ENCODE measurements at regions of chr19 and their contacts with region 1.

Region 1: DNA sequence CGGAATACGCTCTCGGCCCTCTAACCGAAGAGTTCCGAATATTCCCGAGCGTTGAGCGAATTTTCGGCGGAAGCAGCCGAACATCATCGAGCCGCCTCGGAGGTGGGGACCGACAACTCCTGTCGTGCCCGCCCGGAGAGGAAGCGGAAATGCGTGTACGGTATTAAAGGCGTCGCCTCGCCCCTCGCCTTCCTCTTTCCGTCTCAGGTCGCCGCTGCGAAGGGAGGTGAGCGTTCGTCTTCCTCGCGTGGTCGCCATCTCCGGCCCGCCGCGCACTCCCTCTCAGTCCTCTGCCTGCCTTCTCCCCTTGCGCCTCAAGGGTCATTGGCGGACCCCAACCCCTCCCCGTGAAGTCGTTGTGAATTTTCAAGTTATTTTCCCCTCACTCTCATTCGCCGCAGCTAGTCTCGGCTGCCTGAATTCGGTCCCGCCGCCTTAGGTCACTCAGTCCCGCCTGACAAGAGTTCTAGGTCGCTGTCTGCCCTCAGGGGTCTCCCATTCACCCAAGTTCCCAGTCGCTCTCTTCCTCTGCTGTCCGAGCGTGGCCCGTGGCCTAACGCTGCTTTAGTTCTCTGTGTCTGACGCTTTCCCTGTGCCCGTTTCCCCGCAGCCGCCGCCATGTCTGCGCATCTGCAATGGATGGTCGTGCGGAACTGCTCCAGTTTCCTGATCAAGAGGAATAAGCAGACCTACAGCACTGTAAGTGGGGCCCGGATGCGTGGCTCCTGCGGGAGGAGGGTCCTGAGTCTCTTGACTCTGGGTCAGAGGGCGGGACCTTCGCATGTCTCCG is at the start of gene RPL28:
- DNase-seq: peak; percentile 98 to 99 (median 99)
- H3K4me3 ChIP-seq: peak within 1 kb of the TSS; percentile 56
- H3K27ac ChIP-seq: peak within 1 kb of the TSS; percentile 73 to 95
- H3K4me1 ChIP-seq: peaks cover 26% of the 10 kb centered on the region
- H3K27me3 ChIP-seq: no peaks in the 10 kb centered on the region
- CTCF ChIP-seq: peak in 2 of 3 donors; percentile 16 to 21
- EP300 ChIP-seq: no peak
- POLR2A ChIP-seq: peak; percentile 94
- total RNA-seq, gene RPL28: 604 to 2,543 (median 2,257) TPM

Region 2: DNA sequence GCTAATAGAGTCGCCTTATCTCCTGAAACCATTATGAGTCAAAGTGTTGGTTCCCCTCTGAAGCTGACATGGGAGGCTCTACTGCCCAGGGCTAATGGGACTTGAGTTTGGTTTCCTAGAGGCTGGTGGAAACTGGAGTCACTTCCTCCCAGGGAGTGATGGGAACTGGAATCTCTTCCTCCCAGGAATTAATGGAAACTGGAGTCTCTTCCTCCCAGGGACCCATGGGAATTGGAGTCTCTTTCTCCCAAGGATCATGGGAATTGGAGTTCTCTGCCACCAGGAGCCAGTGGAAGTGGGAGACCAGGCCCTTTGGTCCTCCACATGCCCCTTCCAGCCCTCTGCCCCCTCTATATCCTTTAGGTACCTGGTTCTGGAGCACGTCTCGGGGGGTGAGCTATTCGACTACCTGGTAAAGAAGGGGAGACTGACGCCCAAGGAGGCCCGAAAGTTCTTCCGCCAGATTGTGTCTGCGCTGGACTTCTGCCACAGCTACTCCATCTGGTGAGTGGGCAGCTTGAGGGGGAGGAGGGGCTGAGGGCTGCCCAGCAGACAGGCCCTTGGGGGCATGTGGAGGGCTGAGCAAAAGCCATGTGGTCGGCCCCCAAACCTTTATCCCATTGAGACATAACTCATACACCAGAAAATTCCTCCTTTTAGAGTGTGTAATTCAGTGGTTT is 96.7 kb before region 1 on chr19:
- intact Hi-C with region 1: loop called in 1 of 4 experiments (anchors 5 kb)
- DNase-seq: no peak
- H3K4me3 ChIP-seq: no peak overlapping the region
- H3K27ac ChIP-seq: no peak overlapping the region
- H3K4me1 ChIP-seq: peaks cover 2% of the 10 kb centered on the region
- H3K27me3 ChIP-seq: no peaks in the 10 kb centered on the region
- CTCF ChIP-seq: no peak
- EP300 ChIP-seq: no peak
- POLR2A ChIP-seq: no peak

Region 3: GRCh38 chr19:55301459-55302317 is 84.2 kb before region 1 on chr19:
- intact Hi-C with region 1: loop called in 2 of 4 experiments (anchors 5 to 10 kb)
- DNase-seq: peak; percentile 86 to 93 (median 91)
- H3K4me3 ChIP-seq: peak overlapping the region; percentile 28
- H3K27ac ChIP-seq: no peak overlapping the region
- H3K4me1 ChIP-seq: peaks cover 1% of the 10 kb centered on the region
- H3K27me3 ChIP-seq: no peaks in the 10 kb centered on the region
- CTCF ChIP-seq: peak; percentile 88 to 93 (median 89)
- EP300 ChIP-seq: no peak
- POLR2A ChIP-seq: no peak

Region 4: GRCh38 chr19:55341171-55341588 is 44.8 kb before region 1 on chr19:
- intact Hi-C with region 1: loop called in 1 of 4 experiments (anchors 5 kb)
- DNase-seq: peak; percentile 67 to 75 (median 68)
- H3K4me3 ChIP-seq: peak overlapping the region; percentile 93
- H3K27ac ChIP-seq: peak overlapping the region in 1 of 2 donors; percentile 14
- H3K4me1 ChIP-seq: peaks cover 9% of the 10 kb centered on the region
- H3K27me3 ChIP-seq: no peaks in the 10 kb centered on the region
- CTCF ChIP-seq: no peak
- EP300 ChIP-seq: no peak
- POLR2A ChIP-seq: no peak

Region 5: DNA sequence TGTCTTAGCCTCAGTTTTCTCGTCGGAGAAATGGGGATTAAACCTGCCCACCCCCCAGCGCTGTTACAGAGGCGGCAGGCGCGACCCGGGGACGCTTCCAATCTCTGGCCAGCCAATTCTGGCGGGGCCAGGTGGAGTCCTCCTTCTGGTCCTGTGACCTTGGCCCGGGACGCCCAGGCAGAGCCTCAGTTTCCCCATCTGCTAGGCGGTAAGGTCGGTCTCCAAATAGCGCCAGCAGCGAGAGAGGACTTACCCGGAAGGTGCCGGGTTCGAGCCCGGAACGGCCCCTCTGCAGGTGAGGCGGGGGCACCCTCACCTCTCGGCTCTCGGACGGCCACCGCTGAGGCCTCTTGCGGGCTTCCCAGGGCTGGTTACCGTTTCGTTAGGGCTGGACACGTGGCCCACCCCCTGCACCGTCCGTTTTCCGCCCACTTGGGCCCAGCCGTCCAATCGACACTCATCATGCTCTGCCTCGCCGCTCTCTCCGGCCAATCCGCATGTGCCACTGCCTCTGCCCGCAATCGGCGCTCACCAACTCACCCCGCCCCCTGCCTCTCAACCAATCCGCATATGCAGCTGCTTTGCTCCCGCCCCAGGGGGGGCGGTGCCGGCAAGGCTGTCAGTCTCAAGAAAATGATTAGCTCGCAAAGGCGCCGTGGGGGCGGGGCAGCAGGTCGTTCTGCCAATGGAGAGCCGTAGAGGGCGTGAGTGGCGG is 75.5 kb after region 1 on chr19 and contains the start of gene ISOC2:
- intact Hi-C with region 1: loop called in 1 of 4 experiments (anchors 5 kb)
- DNase-seq: peak; percentile 100
- H3K4me3 ChIP-seq: peak within 1 kb of the TSS; percentile 60
- H3K27ac ChIP-seq: peak within 1 kb of the TSS; percentile 64 to 72
- H3K4me1 ChIP-seq: no peaks in the 10 kb centered on the region
- H3K27me3 ChIP-seq: no peaks in the 10 kb centered on the region
- CTCF ChIP-seq: no peak
- EP300 ChIP-seq: peak; percentile 12
- POLR2A ChIP-seq: peak; percentile 82
- total RNA-seq, gene ISOC2: 21.8 to 39.2 (median 31.7) TPM